Natural killer cell (primary cell): ENCODE measurements at regions of chr4 and their contacts with region 1.

Region 1: DNA sequence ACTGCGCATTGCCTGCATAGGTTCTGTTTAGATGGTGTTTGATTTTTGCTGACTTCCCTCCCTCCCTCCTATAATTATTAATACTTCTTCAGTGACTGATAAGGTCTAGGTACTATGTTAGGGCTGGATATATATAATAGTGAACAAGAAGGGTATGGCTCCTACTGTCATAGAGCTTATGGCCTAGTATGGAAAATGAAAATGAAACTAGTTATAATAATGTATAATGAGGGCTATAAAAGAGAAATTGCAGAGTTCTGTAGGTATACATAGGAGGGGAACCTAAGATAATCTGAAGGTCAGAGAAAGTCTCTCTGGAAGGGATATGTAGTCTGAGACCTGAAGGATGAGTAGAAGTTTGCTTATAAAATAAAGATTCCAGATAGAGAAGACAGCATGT is 102.1 kb downstream of the DCK start:
- DNase-seq: peak in 1 of 2 donors; percentile 15
- ATAC-seq: peak; percentile 72 to 97 (median 84)
- H3K4me3 ChIP-seq: no peak overlapping the region
- H3K4me3 Mint-ChIP-seq: peak overlapping the region; percentile 84
- H3K27ac ChIP-seq: peak overlapping the region; percentile 58
- H3K27ac Mint-ChIP-seq: peak overlapping the region; percentile 67 to 72
- H3K4me1 ChIP-seq: peaks cover 9% of the 10 kb centered on the region
- H3K4me1 Mint-ChIP-seq: peaks cover 17 to 24% of the 10 kb centered on the region in 2 donors
- H3K27me3 ChIP-seq: no peaks in the 10 kb centered on the region
- H3K27me3 Mint-ChIP-seq: no peaks in the 10 kb centered on the region
- CTCF ChIP-seq: no peak

Region 2: DNA sequence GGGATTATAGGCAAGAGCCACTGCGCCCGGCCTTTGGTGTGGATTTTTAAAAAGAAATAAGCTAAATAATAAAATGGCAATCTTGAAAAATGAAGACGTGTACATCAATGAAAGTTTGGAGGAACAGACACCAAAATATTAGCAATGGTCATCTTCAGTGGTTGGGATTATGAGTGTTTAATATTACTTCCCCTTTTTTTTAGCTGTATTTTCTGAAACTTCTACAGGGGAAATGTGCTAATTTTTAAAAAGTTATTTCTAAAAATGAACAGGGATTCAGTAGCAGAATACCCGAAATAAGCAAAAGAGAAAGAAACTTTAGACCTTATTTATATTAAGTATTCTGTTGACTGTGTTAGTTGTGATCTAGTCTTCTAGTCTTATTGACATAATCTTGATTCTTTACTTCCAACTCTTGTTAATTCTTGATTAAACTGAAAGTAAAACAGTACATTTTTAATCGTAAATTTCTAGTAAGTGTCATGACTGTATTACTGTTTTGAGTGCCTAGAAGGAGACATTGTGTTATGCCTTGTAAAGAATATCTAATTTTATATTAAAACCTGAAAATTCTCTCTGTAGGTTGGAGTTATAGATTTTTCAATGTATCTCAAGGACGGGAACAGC is 322.5 kb before region 1 on chr4:
- intact Hi-C with region 1: no loop called
- DNase-seq: no peak
- ATAC-seq: no peak
- H3K4me3 ChIP-seq: no peak overlapping the region
- H3K4me3 Mint-ChIP-seq: no peak overlapping the region
- H3K27ac ChIP-seq: no peak overlapping the region
- H3K27ac Mint-ChIP-seq: no peak overlapping the region
- H3K4me1 ChIP-seq: no peaks in the 10 kb centered on the region
- H3K4me1 Mint-ChIP-seq: no peaks in the 10 kb centered on the region
- H3K27me3 ChIP-seq: no peaks in the 10 kb centered on the region
- H3K27me3 Mint-ChIP-seq: no peaks in the 10 kb centered on the region
- CTCF ChIP-seq: no peak

Region 3: GRCh38 chr4:70901984-70902576 is 193.5 kb before region 1 on chr4 and contains the start of gene MOB1B:
- intact Hi-C with region 1: no loop called
- DNase-seq: peak; percentile 60 to 88
- ATAC-seq: peak; percentile 93 to 97 (median 95)
- H3K4me3 ChIP-seq: peak within 1 kb of the TSS; percentile 99
- H3K4me3 Mint-ChIP-seq: peak within 1 kb of the TSS; percentile 96
- H3K27ac ChIP-seq: peak within 1 kb of the TSS; percentile 58
- H3K27ac Mint-ChIP-seq: peak within 1 kb of the TSS; percentile 72 to 92
- H3K4me1 ChIP-seq: peaks cover 12% of the 10 kb centered on the region
- H3K4me1 Mint-ChIP-seq: peaks cover 30 to 34% of the 10 kb centered on the region in 2 donors
- H3K27me3 ChIP-seq: no peaks in the 10 kb centered on the region
- H3K27me3 Mint-ChIP-seq: no peaks in the 10 kb centered on the region
- CTCF ChIP-seq: no peak
- total RNA-seq, gene MOB1B: 15.1 to 23.6 (median 22.6) TPM

Region 4: GRCh38 chr4:71074452-71075299 is 20.9 kb before region 1 on chr4:
- intact Hi-C with region 1: loop called (anchors 1 kb)
- DNase-seq: no peak
- ATAC-seq: no peak
- H3K4me3 ChIP-seq: no peak overlapping the region
- H3K4me3 Mint-ChIP-seq: no peak overlapping the region
- H3K27ac ChIP-seq: no peak overlapping the region
- H3K27ac Mint-ChIP-seq: no peak overlapping the region
- H3K4me1 ChIP-seq: no peaks in the 10 kb centered on the region
- H3K4me1 Mint-ChIP-seq: peaks cover 11 to 19% of the 10 kb centered on the region in 2 donors
- H3K27me3 ChIP-seq: peaks cover 3% of the 10 kb centered on the region
- H3K27me3 Mint-ChIP-seq: peaks cover 5 to 7% of the 10 kb centered on the region in 2 donors
- CTCF ChIP-seq: no peak